Caco-2 (cell line): ENCODE measurements at regions of chr10 and their contacts with region 1.

Region 1: DNA sequence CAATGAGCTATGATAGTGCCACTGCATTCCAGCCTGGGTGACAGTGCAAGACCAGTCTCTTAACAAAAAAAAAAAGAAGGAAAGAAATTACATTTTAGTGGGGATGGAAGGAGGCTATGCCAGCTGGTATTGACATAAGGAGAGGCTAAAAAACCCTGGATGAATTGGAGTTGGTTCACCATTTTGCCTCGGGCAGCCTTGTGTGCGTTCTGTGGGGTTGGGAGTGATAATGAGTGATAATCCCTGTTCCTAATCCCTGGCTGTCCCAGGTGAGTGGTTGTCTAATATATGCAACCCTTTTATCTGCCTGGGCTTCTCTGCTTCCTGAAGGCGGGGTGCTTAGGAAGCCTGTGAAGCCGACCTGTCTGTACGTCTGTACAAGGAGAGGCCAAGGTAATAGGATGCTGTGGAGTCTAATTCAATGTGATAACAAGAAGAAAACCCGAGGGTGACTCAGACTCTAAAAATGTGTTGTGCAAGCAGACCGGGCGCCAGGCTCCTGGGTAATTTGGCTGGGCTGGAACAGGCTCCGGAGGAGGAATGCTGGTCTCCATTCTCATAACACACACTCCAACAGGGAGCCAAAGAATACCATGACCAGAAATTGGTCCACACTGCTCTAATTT is 43.5 kb downstream of the THNSL1 start:
- DNase-seq: peak; percentile 94 to 95
- H3K4me3 ChIP-seq: no peak overlapping the region
- H3K4me3 Mint-ChIP-seq: peak overlapping the region; percentile 70
- H3K27ac Mint-ChIP-seq: peak overlapping the region; percentile 94
- H3K4me1 ChIP-seq: peaks cover 35% of the 10 kb centered on the region
- H3K4me1 Mint-ChIP-seq: peaks cover 48% of the 10 kb centered on the region
- H3K27me3 ChIP-seq: no peaks in the 10 kb centered on the region
- H3K27me3 Mint-ChIP-seq: no peaks in the 10 kb centered on the region
- CTCF ChIP-seq: no peak

Region 2: DNA sequence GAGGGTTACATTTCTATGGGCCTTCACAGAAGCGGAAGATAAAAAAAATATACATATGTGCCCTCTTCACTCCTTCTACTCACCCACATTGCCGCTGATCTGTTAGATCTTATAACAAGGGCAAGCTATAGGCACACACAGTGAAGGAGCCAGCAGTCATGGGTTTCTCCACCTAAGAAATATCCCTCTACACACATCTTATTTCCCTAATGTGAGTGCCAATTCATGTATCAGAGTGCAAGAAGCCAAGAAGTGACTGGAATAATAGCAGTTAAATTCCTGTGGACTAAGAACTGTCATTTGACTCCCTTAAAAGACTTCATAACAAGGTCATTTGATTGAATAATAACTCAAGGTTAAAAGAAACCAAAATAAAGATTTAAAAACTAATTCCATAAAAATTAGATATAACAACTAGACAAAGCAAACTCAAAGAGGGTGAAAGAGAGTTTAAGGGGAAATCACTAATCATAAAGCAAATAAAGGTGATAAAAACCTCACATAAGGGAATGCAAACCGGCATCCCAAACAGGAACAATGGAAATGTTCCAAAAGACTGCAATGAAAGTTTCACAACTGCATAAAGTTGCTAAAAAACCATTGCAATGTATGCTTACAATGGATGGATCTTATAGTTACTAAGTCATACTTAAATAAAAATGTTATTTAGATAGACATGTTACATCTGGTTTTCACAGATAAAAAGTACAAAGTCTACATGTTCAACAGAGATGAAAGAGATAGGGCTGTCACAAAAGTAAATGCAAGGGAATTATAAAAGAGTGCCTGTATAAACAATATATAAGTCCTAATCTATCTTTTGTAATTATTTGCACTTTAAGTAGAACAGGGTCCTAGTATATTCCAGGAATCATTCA is 379.0 kb before region 1 on chr10:
- CTCF ChIA-PET with region 1: no interaction called
- POLR2A ChIA-PET with region 1: no interaction called
- intact Hi-C with region 1: loop called (anchors 2 kb)
- DNase-seq: peak in 1 of 2 experiments; percentile 64
- H3K4me3 ChIP-seq: no peak overlapping the region
- H3K4me3 Mint-ChIP-seq: peak overlapping the region; percentile 58
- H3K27ac Mint-ChIP-seq: peak overlapping the region; percentile 20
- H3K4me1 ChIP-seq: peaks cover 25% of the 10 kb centered on the region
- H3K4me1 Mint-ChIP-seq: peaks cover 19% of the 10 kb centered on the region
- H3K27me3 ChIP-seq: no peaks in the 10 kb centered on the region
- H3K27me3 Mint-ChIP-seq: no peaks in the 10 kb centered on the region
- CTCF ChIP-seq: no peak

Region 3: GRCh38 chr10:24724381-24725228 is 335.3 kb before region 1 on chr10:
- CTCF ChIA-PET with region 1: no interaction called
- POLR2A ChIA-PET with region 1: no interaction called
- intact Hi-C with region 1: loop called (anchors 5 kb)
- DNase-seq: peak; percentile 99 to 100
- H3K4me3 ChIP-seq: peak overlapping the region; percentile 85
- H3K4me3 Mint-ChIP-seq: no peak overlapping the region
- H3K27ac Mint-ChIP-seq: peak overlapping the region; percentile 86
- H3K4me1 ChIP-seq: peaks cover 8% of the 10 kb centered on the region
- H3K4me1 Mint-ChIP-seq: peaks cover 21% of the 10 kb centered on the region
- H3K27me3 ChIP-seq: no peaks in the 10 kb centered on the region
- H3K27me3 Mint-ChIP-seq: no peaks in the 10 kb centered on the region
- CTCF ChIP-seq: no peak

Region 4: DNA sequence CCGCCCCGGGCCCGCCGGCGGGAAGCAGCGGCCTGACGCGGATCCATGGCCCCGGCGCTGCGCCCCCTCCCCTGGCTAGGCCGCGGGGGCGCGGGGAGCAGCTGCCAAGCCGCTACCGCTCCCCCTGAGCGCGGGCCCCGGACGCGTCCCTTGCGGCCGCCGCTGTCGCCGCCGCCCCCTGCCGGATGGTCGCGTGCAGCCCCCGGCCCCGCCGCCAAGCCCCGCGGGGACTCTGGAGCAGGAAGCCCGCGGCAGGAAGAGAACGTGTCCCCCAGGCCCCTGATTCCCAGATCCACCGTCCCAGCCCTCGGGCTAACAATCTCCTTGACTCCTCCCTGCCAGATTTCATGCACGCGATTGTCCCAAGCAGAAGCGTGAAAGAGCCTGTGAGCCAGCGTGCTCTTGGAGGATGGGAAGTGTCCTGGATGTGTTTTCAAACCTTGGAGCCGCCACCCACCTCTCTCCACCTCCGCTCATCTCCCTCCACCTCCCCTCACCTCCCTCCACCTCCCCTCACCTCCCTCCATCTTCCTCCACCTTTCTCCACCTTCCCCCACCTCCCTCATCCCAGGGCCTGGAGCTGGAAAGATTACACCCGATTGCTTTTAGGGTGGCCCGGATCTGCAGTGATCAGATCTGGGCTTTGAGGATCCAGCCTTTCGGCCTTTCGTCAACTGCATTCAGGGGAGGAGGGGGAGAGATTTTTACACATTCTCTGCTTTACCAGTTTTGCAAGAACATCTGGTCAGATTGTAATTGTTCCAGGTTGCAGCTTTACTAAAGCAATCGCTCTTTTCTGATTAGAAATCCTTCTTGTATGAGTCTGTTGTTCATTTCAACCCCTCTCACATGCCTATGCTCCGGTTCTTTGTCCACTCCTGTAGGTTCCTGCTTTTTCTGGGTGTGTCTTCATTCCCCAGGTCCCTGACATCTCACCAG is 106.9 kb before region 1 on chr10:
- CTCF ChIA-PET with region 1: no interaction called
- POLR2A ChIA-PET with region 1: interaction called, 4 read pairs
- intact Hi-C with region 1: loop called (anchors 1 kb)
- DNase-seq: peak; percentile 85 to 91
- H3K4me3 ChIP-seq: peak overlapping the region; percentile 97
- H3K4me3 Mint-ChIP-seq: peak overlapping the region; percentile 84
- H3K27ac Mint-ChIP-seq: peak overlapping the region; percentile 90
- H3K4me1 ChIP-seq: peaks cover 32% of the 10 kb centered on the region
- H3K4me1 Mint-ChIP-seq: peaks cover 23% of the 10 kb centered on the region
- H3K27me3 ChIP-seq: no peaks in the 10 kb centered on the region
- H3K27me3 Mint-ChIP-seq: no peaks in the 10 kb centered on the region
- CTCF ChIP-seq: peak; percentile 47 to 72

Region 5: DNA sequence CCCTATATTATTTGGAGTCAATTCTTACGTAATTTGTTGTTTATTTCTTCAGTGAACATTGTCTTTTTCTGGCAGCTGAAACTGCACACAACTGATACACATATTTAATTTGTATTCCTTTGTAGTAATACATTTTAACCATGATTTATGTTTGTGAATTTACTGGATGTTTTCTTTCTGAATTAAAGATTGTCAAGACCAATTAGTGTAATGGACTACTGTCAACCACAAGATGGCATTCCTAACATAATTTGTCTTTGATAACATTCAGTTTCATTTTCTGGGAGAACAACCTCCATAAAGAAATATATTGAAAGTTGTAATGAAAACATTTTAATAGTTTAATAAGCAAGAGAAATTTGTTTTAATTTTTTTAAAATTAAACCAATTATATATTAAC is 33.4 kb before region 1 on chr10:
- CTCF ChIA-PET with region 1: no interaction called
- POLR2A ChIA-PET with region 1: no interaction called
- intact Hi-C with region 1: loop called (anchors 2 kb)
- DNase-seq: no peak
- H3K4me3 ChIP-seq: no peak overlapping the region
- H3K4me3 Mint-ChIP-seq: no peak overlapping the region
- H3K27ac Mint-ChIP-seq: no peak overlapping the region
- H3K4me1 ChIP-seq: no peaks in the 10 kb centered on the region
- H3K4me1 Mint-ChIP-seq: no peaks in the 10 kb centered on the region
- H3K27me3 ChIP-seq: no peaks in the 10 kb centered on the region
- H3K27me3 Mint-ChIP-seq: no peaks in the 10 kb centered on the region
- CTCF ChIP-seq: peak; percentile 47 to 52

Region 6: DNA sequence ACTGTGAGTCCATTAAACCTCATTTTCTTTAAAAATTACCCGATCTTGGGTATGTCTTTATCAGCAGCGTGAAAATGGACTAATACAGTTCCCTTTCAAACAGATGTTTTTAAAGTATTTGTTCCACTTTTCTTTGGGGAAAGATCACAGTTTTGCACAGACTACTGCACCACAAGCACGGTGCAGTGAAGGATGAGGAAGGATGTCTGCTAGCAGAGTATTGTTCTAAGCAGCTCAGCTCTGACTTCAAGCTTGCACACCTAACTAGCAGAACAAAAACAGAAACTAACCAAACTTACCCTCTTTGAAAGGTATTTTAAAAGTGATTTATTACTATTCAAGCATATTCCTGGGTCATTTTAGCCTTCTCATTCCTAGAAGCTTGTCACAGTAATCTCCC is 23.5 kb before region 1 on chr10:
- CTCF ChIA-PET with region 1: no interaction called
- POLR2A ChIA-PET with region 1: interaction called, 4 read pairs
- intact Hi-C with region 1: loop called (anchors 1 kb)
- DNase-seq: no peak
- H3K4me3 ChIP-seq: no peak overlapping the region
- H3K4me3 Mint-ChIP-seq: no peak overlapping the region
- H3K27ac Mint-ChIP-seq: no peak overlapping the region
- H3K4me1 ChIP-seq: peaks cover 24% of the 10 kb centered on the region
- H3K4me1 Mint-ChIP-seq: peaks cover 33% of the 10 kb centered on the region
- H3K27me3 ChIP-seq: no peaks in the 10 kb centered on the region
- H3K27me3 Mint-ChIP-seq: no peaks in the 10 kb centered on the region
- CTCF ChIP-seq: no peak